Caco-2 (cell line): ENCODE measurements at regions of chr1 and their contacts with region 1.

Region 1: GRCh38 chr1:202056644-202057461 is 46.5 kb downstream of the ELF3 start:
- DNase-seq: peak in 1 of 2 experiments; percentile 73
- H3K4me3 ChIP-seq: no peak overlapping the region
- H3K4me3 Mint-ChIP-seq: no peak overlapping the region
- H3K27ac Mint-ChIP-seq: peak overlapping the region; percentile 26
- H3K4me1 ChIP-seq: peaks cover 30% of the 10 kb centered on the region
- H3K4me1 Mint-ChIP-seq: peaks cover 25% of the 10 kb centered on the region
- H3K27me3 ChIP-seq: no peaks in the 10 kb centered on the region
- H3K27me3 Mint-ChIP-seq: no peaks in the 10 kb centered on the region
- CTCF ChIP-seq: no peak

Region 2: DNA sequence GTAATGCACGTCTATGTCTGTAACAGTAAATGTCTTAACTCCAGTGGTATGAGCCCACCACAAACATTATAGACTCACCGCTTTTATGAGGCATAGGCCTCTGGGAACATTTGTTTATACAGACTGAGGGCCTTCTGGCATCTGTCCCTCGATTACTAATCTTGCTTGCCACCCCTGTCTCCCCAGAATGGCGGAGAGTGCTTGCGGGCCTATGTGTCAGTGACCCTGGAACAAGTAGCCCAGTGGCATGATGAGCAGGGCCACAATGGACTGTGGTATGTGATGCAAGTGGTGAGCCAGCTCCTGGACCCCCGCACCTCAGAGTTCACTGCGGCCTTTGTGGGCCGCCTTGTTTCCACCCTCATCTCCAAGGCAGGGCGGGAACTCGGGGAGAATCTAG is 186.5 kb before region 1 on chr1:
- CTCF ChIA-PET with region 1: no interaction called
- POLR2A ChIA-PET with region 1: no interaction called
- intact Hi-C with region 1: no loop called
- DNase-seq: no peak
- H3K4me3 ChIP-seq: no peak overlapping the region
- H3K4me3 Mint-ChIP-seq: no peak overlapping the region
- H3K27ac Mint-ChIP-seq: no peak overlapping the region
- H3K4me1 ChIP-seq: no peaks in the 10 kb centered on the region
- H3K4me1 Mint-ChIP-seq: no peaks in the 10 kb centered on the region
- H3K27me3 ChIP-seq: no peaks in the 10 kb centered on the region
- H3K27me3 Mint-ChIP-seq: no peaks in the 10 kb centered on the region
- CTCF ChIP-seq: no peak

Region 3: GRCh38 chr1:202105539-202106276 is 48.9 kb after region 1 on chr1:
- CTCF ChIA-PET with region 1: no interaction called
- POLR2A ChIA-PET with region 1: interaction called, 4 read pairs
- intact Hi-C with region 1: loop called (anchors 5 kb)
- DNase-seq: peak; percentile 89 to 92
- H3K4me3 ChIP-seq: no peak overlapping the region
- H3K4me3 Mint-ChIP-seq: peak overlapping the region; percentile 53
- H3K27ac Mint-ChIP-seq: peak overlapping the region; percentile 89
- H3K4me1 ChIP-seq: peaks cover 45% of the 10 kb centered on the region
- H3K4me1 Mint-ChIP-seq: peaks cover 42% of the 10 kb centered on the region
- H3K27me3 ChIP-seq: no peaks in the 10 kb centered on the region
- H3K27me3 Mint-ChIP-seq: no peaks in the 10 kb centered on the region
- CTCF ChIP-seq: no peak